ENCODE measurements at regions of chr4 and their contacts with region 1.

Region 1: DNA sequence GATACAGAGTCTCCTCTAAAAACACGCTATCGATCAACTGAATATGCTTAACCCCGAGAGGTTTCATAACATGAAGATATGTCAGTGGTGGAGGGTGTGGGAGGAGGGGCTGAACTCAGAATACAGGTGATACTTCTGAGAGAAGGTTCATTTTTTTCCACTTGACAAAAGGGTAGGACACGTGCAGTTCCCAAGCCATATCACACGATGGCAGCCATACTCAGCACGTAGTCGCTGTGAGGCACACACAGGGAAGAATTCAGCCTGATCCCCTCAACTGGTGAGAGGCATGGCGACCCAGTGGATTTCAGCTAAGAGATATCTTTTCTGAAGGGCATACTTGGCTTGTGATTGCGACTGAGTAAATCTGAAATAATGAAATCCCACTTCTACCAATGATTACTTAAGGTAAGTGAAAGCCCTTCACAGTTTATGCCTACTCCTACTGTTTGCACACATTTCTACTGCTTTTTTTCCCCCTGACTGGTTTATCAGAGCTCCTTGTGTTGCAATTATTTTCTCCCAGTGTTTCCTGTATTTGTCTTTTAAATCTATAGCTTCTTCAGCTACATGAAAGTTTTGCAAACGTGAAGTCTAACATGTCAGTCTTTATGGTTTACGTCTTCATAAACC is 133.1 kb downstream of the CORIN start:
- DNase-seq: peak in 1 of 2 experiments; percentile 16
- H3K4me3 ChIP-seq: no peak overlapping the region
- H3K27ac ChIP-seq: no peak overlapping the region
- H3K4me1 ChIP-seq: no peaks in the 10 kb centered on the region
- H3K27me3 ChIP-seq: no peaks in the 10 kb centered on the region
- CTCF ChIP-seq: peak; percentile 49; the same call in 1 of the 2 replicates

Region 2: DNA sequence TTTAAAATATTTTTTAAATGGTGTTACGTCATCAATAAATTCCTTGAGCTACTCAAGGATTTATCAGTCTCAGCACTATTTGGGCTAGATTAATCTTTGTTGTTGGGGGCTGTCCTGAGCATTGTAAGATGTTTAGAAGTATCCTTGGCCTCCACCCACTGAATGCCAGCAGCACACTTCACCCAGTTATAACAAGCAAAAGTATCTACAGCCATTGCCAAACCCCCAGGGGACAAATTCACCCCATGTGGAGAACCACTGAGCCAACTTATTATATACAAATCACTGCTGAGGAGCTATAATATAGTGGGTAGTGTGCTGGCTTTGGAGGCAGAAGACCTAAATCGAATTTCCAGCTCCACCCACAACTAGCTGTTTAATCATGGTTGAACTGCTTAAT is 161.5 kb before region 1 on chr4:
- CTCF ChIA-PET with region 1: no interaction called
- POLR2A ChIA-PET with region 1: interaction called, 15 read pairs
- intact Hi-C with region 1: no loop called
- DNase-seq: no peak
- H3K4me3 ChIP-seq: no peak overlapping the region
- H3K27ac ChIP-seq: no peak overlapping the region
- H3K4me1 ChIP-seq: no peaks in the 10 kb centered on the region; the same call in 1 of the 2 replicates
- H3K27me3 ChIP-seq: no peaks in the 10 kb centered on the region
- CTCF ChIP-seq: no peak